Spleen (tissue), 13 donors: ENCODE measurements at regions of chr7 and their contacts with region 1.

Region 1: DNA sequence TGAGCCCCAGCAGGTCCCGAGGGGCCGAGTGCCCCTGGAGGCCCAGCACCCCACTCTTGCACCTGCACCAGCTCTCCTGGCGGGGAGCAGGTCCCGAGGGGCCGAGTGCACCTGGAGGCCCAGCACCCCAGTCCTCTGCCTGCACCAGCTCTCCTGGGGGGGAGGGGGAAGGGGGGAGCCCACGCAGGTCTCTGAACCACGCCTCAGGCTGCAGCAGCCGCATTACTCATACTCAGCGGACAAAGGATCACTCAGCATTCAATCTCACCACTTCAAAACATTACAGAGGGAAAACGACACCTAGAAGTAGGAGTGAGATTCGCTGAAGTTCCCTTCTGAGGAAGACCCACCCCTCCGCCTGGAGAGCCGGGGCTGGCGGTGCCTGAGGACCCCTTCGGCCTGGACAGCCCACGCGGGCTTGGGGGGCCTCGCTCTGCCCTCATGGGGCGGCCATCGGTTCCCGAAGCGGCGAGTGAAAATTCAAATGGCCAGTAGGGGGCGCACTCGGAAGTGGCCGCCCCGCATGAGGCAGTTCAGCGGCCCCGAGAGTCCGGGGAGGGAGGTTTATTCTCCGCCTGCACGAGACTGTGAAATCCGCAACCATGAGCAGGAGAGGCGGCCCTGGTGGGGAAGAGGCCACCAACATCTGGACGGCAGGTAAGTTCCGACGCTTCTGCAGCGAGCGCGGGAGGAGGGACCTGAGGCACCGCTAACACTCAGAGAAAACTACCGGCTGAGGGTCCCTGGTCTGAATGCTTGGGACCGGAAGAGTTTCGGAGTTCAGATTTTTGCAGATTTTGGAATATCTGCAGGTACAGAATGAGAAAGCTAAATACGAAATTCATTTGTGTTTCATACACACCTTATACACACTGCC is 1.1 kb upstream of the GPER1 start:
- DNase-seq: peak; percentile 91
- H3K4me3 ChIP-seq: peak overlapping the region; percentile 1 to 66 (median 29)
- H3K27ac ChIP-seq: peak overlapping the region in 5 of 8 donors; percentile 60 to 83 (median 72)
- H3K4me1 ChIP-seq: peaks cover 18 to 88% (median 58%) of the 10 kb centered on the region in 6 donors
- H3K27me3 ChIP-seq: no peaks in the 10 kb centered on the region
- CTCF ChIP-seq: peak; percentile 58 to 96 (median 88)
- POLR2A ChIP-seq: no peak

Region 2: GRCh38 chr7:974820-975681 is 111.8 kb before region 1 on chr7 and contains the start of gene COX19:
- intact Hi-C with region 1: no loop called
- DNase-seq: peak; percentile 98
- H3K4me3 ChIP-seq: peak within 1 kb of the TSS; percentile 92 to 100 (median 100)
- H3K27ac ChIP-seq: peak within 1 kb of the TSS; percentile 97 to 100 (median 99)
- H3K4me1 ChIP-seq: peaks cover 21 to 62% (median 43%) of the 10 kb centered on the region in 6 donors
- H3K27me3 ChIP-seq: no peaks in the 10 kb centered on the region
- CTCF ChIP-seq: peak in 1 of 11 experiments; percentile 16
- POLR2A ChIP-seq: peak; percentile 61 to 84 (median 62)
- total RNA-seq, gene COX19: 12.4 to 29.1 (median 18.9) TPM

Region 3: DNA sequence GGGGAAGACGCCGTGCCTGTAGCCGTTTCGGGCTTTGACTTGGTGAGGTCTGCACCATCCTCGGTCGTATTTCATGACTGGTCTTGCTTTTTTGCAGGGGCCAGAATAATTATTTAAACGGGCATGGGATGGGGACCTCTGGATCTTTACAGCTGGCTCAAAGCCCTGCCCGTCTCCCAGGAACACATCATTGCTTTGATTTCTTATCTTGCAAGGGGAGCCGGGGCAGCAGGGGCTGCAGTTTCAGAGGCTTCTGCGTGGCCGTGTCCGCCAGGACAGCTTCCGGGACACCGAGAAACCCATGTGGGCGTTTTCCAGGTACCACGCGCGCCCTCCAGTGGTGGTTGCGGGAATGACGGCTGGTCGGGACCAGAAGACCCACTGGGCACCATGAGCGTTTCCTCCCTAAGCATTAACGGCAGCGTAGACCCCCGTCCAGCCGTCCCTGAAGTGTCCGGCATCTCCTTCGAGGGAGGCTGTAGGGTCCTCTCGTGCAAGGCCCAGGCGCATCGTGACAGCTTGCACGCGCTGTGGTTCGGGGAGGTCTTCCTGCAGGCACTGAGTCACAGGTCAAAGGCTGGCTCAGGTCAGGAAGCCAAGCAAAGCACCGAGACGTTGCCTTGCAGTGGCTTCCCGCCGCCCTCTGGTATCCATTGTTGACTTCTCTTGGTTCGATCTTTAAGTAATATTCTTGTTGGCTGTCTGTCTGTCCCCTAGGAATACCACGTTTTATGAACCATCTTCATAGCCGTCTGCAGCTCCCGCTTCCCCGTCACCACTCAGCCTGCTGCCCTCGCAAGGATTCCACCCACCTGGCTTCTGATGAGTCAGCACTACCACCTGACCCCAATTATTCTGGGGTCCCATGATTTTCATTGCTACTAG is 89.4 kb after region 1 on chr7:
- intact Hi-C with region 1: loop called (anchors 10 kb)
- DNase-seq: peak; percentile 93
- H3K4me3 ChIP-seq: peak overlapping the region in 3 of 8 donors; percentile 12 to 62 (median 13)
- H3K27ac ChIP-seq: peak overlapping the region in 3 of 8 donors; percentile 8 to 39 (median 22)
- H3K4me1 ChIP-seq: peaks cover 8 to 18% (median 13%) of the 10 kb centered on the region in 6 donors
- H3K27me3 ChIP-seq: peaks cover 0 to 30% (median 0%) of the 10 kb centered on the region in 7 donors
- CTCF ChIP-seq: peak; percentile 81 to 97 (median 90)
- POLR2A ChIP-seq: peak in 1 of 3 donors; percentile 23